Left colon (tissue), 2 donors: ENCODE measurements at regions of chrX and their contacts with region 1.

Region 1: GRCh38 chrX:103464774-103465117 is 54.5 kb downstream of the RAB40A start:
- DNase-seq: peak; percentile 45 to 78
- ATAC-seq: peak; percentile 93

Region 2: DNA sequence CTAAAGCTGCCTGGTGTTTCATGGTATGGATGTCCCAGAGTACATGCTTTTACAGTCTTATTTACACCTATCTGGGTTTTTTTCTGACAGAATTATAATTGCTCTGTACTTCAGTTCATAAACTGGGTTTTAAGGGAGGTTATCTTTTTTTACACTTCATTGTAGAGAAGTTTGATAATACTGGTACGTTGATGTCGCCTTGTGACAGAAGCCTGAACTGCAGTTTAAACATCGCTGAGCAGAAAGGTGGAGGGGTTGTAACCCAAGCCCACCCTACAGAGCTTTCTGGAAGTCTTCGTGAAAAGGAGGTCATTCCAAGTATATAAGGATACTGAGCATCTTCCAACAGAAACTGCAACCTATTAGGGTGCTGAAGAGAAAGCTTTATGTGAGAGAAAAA is 447.2 kb before region 1 on chrX:
- intact Hi-C with region 1: no loop called
- DNase-seq: no peak
- ATAC-seq: no peak

Region 3: GRCh38 chrX:103214870-103215424 is 249.8 kb before region 1 on chrX and contains the start of gene BEX4:
- intact Hi-C with region 1: loop called in 1 of 2 experiments (anchors 10 kb)
- DNase-seq: peak; percentile 82 to 87
- ATAC-seq: peak; percentile 93
- total RNA-seq, gene BEX4: 12.3 to 16.8 TPM

Region 4: GRCh38 chrX:103343105-103343504 is 121.6 kb before region 1 on chrX:
- intact Hi-C with region 1: loop called in 1 of 2 experiments (anchors 2 kb)
- DNase-seq: peak in 1 of 2 donors; percentile 53
- ATAC-seq: peak; percentile 49

Region 5: GRCh38 chrX:103629318-103630170 is 164.8 kb after region 1 on chrX:
- intact Hi-C with region 1: no loop called
- DNase-seq: peak; percentile 61 to 66
- ATAC-seq: peak; percentile 83